Keratinocyte (primary cell): ENCODE measurements at regions of chr6 and their contacts with region 1.

Region 1: GRCh38 chr6:169545982-169546381 is 155.8 kb downstream of the WDR27 start:
- DNase-seq: no peak
- H3K4me3 ChIP-seq: no peak overlapping the region
- H3K27ac ChIP-seq: no peak overlapping the region
- H3K4me1 ChIP-seq: no peaks in the 10 kb centered on the region
- H3K27me3 ChIP-seq: no peaks in the 10 kb centered on the region
- CTCF ChIP-seq: no peak

Region 2: DNA sequence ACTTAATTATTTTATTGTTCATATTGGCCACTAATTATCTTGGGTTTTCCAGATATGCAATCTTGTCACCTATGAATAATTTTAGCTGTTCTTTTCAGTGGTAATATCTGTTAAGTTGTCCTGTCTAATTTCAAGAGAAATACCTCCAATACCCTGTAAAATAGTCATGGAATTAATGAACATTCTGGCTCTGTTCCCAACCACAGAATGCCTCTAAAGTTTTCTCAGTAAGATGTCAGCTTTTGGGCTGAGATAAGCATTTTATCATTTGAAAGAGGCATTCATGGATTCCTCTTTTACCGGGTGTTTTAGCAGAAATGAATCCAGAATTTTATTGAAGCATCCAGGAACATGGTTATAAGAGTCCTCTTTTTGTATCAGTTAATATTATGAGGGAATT is 46.6 kb after region 1 on chr6:
- dilution Hi-C with region 1: loop called (anchors 5 kb)
- DNase-seq: no peak
- H3K4me3 ChIP-seq: no peak overlapping the region
- H3K27ac ChIP-seq: no peak overlapping the region
- H3K4me1 ChIP-seq: no peaks in the 10 kb centered on the region
- H3K27me3 ChIP-seq: no peaks in the 10 kb centered on the region
- CTCF ChIP-seq: no peak